ENCODE measurements at regions of chr3 and their contacts with region 1.

Region 1: GRCh38 chr3:124639406-124640237 is 90.6 kb upstream of the UMPS start:
- DNase-seq: peak; percentile 58
- ATAC-seq: peak; percentile 83
- H3K4me3 Mint-ChIP-seq: peak overlapping the region; percentile 61
- H3K27ac Mint-ChIP-seq: peak overlapping the region; percentile 84
- H3K4me1 Mint-ChIP-seq: peaks cover 79% of the 10 kb centered on the region
- H3K27me3 Mint-ChIP-seq: peaks cover 14% of the 10 kb centered on the region

Region 2: DNA sequence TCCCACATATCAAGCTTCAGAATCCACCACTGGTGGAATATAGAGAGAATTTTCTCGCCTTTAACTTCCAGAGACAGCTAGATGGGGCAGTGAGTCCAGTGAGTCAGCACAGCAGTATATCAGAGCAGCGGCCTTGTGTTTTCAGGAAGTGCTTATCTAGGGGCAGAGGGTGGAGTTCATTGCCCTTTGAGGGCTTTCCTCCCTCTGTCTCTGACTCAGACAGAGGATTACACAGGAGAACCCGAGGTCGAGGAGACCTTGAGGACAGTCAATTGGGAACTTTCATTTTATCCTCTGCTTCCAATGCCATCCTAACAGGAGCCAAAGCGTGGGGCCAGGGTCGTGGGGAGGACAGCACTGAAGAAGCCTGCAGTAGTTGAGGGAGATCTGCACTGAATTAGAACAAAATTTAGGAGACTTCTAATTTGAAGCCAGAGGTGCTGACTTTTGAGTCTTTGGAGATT is 19.0 kb before region 1 on chr3:
- CTCF ChIA-PET with region 1: interaction called, 10 read pairs
- POLR2A ChIA-PET with region 1: no interaction called
- DNase-seq: peak; percentile 67
- ATAC-seq: peak; percentile 91
- H3K4me3 Mint-ChIP-seq: peak overlapping the region; percentile 53
- H3K27ac Mint-ChIP-seq: peak overlapping the region; percentile 86
- H3K4me1 Mint-ChIP-seq: peaks cover 41% of the 10 kb centered on the region
- H3K27me3 Mint-ChIP-seq: peaks cover 3% of the 10 kb centered on the region